ENCODE measurements at regions of chr9 and their contacts with region 1.

Region 1: DNA sequence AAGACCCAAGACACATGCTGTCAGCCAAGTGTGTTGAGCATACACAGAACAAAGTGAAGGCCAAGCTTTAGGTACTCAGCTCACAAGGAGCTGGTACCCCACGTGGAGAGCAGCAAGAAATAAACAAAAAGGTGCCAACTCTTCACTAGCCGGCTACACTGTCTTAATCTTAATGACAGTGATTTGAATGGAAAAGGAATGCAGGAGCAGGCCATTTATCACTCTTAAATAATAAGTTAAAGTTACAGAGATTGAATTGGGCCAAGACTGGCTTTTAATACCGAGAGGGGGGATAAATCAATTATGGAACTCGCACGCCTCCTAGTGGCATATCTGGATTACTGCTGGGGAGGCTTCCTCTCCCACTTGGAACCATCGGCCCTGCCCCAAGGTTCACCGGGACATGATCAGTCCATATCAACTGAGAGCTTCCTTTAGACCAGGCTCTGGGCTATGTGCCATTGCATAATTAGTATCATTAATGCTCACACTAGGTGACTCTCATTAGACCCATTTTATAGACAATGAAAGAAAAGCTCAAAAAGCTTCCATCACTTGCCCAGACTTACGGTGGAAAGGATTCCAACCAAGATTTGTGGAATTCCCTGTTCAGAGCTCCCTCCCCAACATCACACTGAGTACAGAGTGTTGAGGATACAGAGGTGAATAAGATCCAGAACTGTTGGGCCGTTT is 94.0 kb downstream of the ACTL7B start:
- DNase-seq: peak in 9 of 10 donors; percentile 32 to 73 (median 60)
- H3K4me3 ChIP-seq: no peak overlapping the region
- H3K27ac ChIP-seq: peak overlapping the region in 7 of 59 donors; percentile 1 to 49 (median 22)
- H3K27me3 ChIP-seq: no peaks in the 10 kb centered on the region
- CTCF ChIP-seq: peak; percentile 77 to 97 (median 92)

Region 2: DNA sequence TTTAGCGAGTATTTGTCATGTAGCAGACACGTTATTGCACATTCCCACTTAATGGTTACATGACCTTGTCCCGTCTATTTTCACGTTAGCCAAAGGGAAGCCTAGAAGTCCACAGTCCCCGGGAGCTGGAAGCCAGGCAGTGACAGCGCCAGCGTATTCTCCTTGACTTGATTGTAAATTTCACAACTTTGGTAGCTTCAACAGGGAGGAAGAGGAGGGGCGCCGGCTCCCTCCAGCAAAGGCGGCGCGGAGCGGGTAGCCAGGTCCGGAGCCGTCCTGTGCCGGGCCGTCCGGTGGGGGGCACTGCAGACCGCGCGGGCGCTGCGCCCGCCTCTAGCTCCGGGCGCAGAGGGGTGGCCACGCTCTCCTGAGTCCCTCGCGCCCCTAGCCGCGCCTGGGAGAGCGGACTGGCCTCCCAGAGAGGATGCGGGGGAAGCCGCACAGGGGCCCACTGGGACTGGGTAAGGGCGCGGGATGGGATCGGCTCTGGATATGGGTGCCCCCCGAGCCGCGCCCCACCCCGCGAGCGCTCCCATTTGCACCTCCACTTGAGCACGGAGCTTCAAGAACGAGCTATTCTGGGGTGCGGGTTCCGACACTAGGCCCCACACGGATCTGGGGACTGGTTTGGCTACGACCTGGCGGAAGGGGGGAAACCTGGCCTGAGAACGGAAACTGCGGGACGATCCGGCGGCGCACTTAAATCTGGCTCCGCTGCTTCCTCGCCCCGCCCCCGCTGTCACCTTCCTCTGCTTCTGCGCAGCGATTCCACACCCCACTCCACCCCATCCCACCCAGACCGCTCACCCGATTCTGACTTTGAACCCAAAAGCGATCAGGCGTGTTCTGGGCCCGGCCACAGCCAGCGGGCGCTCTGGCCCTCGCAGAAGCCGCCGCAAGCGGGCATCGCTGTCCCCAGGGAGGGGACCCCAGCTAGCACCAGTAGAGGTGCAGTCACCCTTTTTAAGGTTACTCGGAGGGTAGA is 1296.0 kb before region 1 on chr9:
- intact Hi-C with region 1: loop called in 1 of 2 experiments (anchors 5 kb)
- DNase-seq: peak in 9 of 10 donors; percentile 29 to 77 (median 49)
- H3K4me3 ChIP-seq: peak overlapping the region; percentile 37 to 84 (median 73)
- H3K27ac ChIP-seq: peak overlapping the region in 4 of 59 donors; percentile 48 to 71 (median 62)
- H3K27me3 ChIP-seq: peaks cover 0 to 5% (median 0%) of the 10 kb centered on the region in 45 donors
- CTCF ChIP-seq: peak; percentile 41 to 94 (median 84)

Region 3: DNA sequence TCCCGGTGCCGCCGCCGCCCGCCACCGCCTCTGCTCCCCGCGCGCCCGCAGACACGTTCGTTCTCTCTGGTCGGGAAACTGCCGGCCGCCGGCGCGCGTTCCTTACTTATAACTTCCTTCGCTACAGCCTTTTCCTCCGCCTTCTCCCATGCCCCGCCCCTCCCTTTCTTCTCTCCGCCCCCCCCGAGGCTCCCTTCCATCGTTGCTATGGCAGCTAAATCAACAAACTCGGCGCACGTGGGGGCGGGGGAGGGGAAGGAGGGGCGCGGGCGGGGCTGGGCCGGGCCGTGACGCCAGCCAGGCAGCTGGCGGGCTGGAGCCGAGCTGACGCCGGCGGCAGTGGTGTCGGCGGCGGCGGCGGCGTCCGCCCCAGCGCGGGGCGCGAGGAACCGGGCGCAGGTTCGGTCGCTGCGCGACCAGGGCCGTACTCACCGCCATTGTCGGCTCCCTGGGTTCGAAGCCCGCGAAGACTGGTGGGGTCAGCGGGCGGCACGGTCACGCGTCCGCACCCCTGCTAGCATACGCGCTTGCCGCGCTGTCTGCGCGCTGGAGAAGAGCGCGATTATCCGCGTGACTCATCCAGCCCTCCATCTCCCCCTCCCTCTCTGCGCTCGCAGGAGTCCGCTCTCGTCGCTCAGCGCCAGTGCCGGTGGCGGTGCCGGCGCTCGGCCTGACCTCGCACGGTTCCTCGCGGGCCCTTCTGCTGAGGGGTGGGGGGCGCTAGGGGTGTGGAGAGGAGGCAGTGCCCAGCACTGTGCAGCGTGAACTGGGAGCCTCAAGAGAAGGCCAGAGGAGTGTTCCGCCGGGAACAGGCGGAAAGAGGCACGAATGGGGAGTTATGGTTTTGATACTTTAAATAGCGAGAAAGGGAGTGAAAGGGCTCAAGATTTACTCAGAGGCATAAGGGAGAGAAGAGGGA is 1271.9 kb before region 1 on chr9 and contains the start of gene KLF4:
- intact Hi-C with region 1: loop called in 1 of 2 experiments (anchors 10 kb)
- DNase-seq: peak; percentile 33 to 88 (median 79)
- H3K4me3 ChIP-seq: peak within 1 kb of the TSS; percentile 44 to 89 (median 70)
- H3K27ac ChIP-seq: peak within 1 kb of the TSS in 50 of 59 donors; percentile 4 to 92 (median 72)
- H3K27me3 ChIP-seq: peaks cover 0 to 20% (median 0%) of the 10 kb centered on the region in 45 donors
- CTCF ChIP-seq: peak in 6 of 56 donors; percentile 7 to 37 (median 17)
- total RNA-seq, gene KLF4: 1.7 to 32.7 (median 8.3) TPM

Region 4: DNA sequence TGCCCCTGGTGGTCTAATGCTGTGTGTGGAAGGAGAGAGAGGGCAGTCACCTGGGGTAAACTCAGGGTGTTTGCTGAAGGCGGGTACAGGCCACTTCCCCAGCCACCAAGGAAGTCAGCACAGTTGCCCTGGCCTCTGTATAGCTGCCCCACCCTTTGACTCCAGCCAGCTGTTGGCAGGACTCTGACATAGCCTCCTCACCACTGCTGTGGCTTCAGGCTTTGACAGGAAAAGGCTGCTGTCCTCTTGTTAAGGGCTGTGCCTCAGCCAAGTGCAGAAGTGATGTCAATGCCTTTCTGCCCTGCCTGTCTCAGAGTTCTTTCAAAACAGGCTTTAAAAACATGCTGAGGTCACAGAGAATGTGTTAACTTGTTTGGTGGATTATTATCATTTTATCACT is 785.0 kb before region 1 on chr9:
- intact Hi-C with region 1: no loop called
- DNase-seq: no peak
- H3K4me3 ChIP-seq: no peak overlapping the region
- H3K27ac ChIP-seq: no peak overlapping the region
- H3K27me3 ChIP-seq: peaks cover 0 to 3% (median 0%) of the 10 kb centered on the region in 45 donors
- CTCF ChIP-seq: no peak

Region 5: DNA sequence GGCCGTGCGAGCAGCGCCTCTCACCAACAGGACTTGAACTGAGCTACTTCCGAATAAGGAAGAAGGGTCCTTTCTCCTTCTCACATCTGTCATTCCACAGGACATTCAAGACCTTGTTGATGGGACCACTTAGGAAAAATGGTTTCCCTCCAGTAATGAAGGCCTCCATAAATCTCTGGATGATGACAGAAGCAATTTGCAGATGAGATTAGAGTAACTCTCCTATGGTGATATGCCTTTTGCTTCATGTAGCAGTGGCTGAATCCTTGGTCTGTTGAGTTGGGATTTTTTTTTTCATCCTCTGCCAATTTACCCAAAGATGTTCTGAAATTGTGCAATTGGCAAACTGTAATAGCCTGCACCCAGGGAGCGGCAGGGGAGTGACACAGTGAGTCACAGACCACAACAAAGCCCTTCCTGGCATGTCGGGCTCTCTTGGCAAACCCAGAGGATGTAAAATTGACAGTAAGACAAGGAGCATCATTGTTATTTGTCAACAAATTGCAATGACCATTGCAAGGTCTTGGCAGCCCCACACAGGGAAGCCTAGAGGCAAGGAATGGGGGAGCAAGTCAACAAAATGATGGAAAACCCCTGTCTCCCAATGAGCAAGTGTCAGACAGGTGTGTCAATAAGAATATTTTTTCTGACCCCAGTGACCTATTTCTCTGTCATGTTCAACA is 181.9 kb before region 1 on chr9:
- intact Hi-C with region 1: loop called in 1 of 2 experiments (anchors 5 kb)
- DNase-seq: peak in 6 of 10 donors; percentile 5 to 81 (median 63)
- H3K4me3 ChIP-seq: no peak overlapping the region
- H3K27ac ChIP-seq: peak overlapping the region in 20 of 59 donors; percentile 0 to 76 (median 56)
- H3K27me3 ChIP-seq: peaks cover 0 to 7% (median 0%) of the 10 kb centered on the region in 45 donors
- CTCF ChIP-seq: peak in 1 of 56 donors; percentile 26

Region 6: DNA sequence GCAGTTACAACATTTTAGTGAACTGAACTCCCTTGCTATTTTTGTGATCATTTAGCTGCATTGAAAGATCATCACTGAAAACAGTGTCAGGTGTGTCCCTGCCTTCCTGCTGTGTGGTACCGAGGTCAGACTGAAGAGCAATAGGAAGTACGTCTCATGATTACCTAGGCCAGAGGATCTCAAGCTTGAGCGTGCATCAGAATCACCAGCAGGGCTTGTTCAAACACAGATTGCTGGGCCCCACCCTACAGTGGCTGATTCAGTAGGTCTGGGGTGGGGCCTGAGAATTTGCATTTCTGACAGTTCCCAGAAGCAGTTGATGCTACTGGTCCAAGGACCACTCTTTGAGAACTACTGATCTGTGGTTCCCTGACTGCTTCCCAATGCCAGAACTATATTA is 65.6 kb before region 1 on chr9:
- intact Hi-C with region 1: no loop called
- DNase-seq: no peak
- H3K4me3 ChIP-seq: no peak overlapping the region
- H3K27ac ChIP-seq: no peak overlapping the region
- H3K27me3 ChIP-seq: no peaks in the 10 kb centered on the region
- CTCF ChIP-seq: no peak

Region 7: GRCh38 chr9:108708448-108708847 is 53.4 kb before region 1 on chr9:
- intact Hi-C with region 1: loop called in 1 of 2 experiments (anchors 5 kb)
- DNase-seq: peak; percentile 13 to 95 (median 89)
- H3K4me3 ChIP-seq: no peak overlapping the region
- H3K27ac ChIP-seq: peak overlapping the region in 54 of 59 donors; percentile 7 to 97 (median 86)
- H3K27me3 ChIP-seq: no peaks in the 10 kb centered on the region
- CTCF ChIP-seq: peak in 18 of 56 donors; percentile 13 to 54 (median 26)